ENCODE measurements at regions of chr2 and their contacts with region 1.

Region 1: DNA sequence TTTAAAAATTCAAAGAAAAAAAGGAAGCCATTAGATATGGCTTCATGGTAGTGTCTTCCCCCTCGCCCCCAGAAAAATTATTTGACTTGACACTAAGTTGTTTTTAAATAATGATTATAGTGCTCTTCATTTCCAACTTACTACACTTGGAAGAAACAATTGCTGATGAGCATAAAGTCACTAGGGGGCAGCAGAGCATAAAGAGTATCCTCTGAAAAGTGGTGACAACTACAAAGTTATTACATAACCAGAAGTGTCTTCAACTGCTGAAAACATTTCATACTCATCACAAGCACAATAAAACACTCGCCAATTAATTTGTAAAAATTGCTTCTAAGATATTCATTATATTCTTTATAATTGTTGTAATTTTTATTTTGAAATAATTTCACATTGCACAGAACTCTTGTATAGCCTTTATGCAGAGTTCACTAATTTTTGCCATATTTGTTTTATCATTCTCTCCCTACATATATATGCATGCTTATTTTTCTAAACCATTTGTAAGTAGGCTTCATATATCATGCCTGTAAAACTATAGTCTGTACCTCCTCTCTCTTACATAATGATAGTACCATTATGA is 54.9 kb downstream of the EXOC6B start:
- DNase-seq: peak; percentile 71
- ATAC-seq: no peak
- H3K4me3 Mint-ChIP-seq: no peak overlapping the region
- H3K27ac Mint-ChIP-seq: no peak overlapping the region
- H3K4me1 Mint-ChIP-seq: no peaks in the 10 kb centered on the region
- H3K27me3 Mint-ChIP-seq: no peaks in the 10 kb centered on the region

Region 2: GRCh38 chr2:72973566-72974435 is 202.8 kb after region 1 on chr2:
- CTCF ChIA-PET with region 1: interaction called, 3 read pairs
- POLR2A ChIA-PET with region 1: no interaction called
- intact Hi-C with region 1: loop called (anchors 1 to 5 kb)
- DNase-seq: peak; percentile 64
- ATAC-seq: peak; percentile 83
- H3K4me3 Mint-ChIP-seq: no peak overlapping the region
- H3K27ac Mint-ChIP-seq: no peak overlapping the region
- H3K4me1 Mint-ChIP-seq: no peaks in the 10 kb centered on the region
- H3K27me3 Mint-ChIP-seq: no peaks in the 10 kb centered on the region

Measured in activated CD4-positive, alpha-beta T cell treated with anti-CD3 and anti-CD28 coated beads for 36 hours (primary cell).